MCF 10A (cell line): ENCODE measurements at regions of chr6 and their contacts with region 1.

Region 1: GRCh38 chr6:70398783-70399728 is 14.3 kb upstream of the FAM135A start:
- DNase-seq: peak; percentile 77
- H3K4me3 Mint-ChIP-seq: peak overlapping the region; percentile 52
- H3K27ac Mint-ChIP-seq: peak overlapping the region; percentile 81
- H3K4me1 Mint-ChIP-seq: peaks cover 24% of the 10 kb centered on the region
- H3K27me3 Mint-ChIP-seq: no peaks in the 10 kb centered on the region
- CTCF ChIP-seq: no peak

Region 2: DNA sequence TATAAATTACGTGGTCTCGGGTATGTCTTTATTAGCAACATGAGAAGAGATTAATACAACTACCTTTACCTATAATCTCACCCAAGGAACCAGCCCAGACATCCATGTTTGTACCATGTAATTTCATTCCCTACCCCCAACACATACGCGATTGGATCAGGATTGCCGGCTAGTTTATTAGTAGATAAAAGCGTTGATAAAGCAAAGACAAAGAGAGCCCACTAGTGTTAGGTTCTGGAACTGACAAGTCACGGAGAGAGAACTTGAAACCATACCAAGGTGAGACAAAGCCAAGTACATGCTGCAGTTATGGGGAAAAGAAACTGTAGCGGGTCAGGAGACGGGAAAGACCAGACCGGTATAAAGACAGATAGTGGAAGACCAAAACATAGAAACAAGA is 23.2 kb before region 1 on chr6:
- CTCF ChIA-PET with region 1: interaction called, 22 read pairs
- POLR2A ChIA-PET with region 1: interaction called, 24 read pairs
- intact Hi-C with region 1: loop called (anchors 2 kb)
- DNase-seq: peak; percentile 27
- H3K4me3 Mint-ChIP-seq: no peak overlapping the region
- H3K27ac Mint-ChIP-seq: no peak overlapping the region
- H3K4me1 Mint-ChIP-seq: peaks cover 24% of the 10 kb centered on the region
- H3K27me3 Mint-ChIP-seq: peaks cover 11% of the 10 kb centered on the region
- CTCF ChIP-seq: no peak

Region 3: DNA sequence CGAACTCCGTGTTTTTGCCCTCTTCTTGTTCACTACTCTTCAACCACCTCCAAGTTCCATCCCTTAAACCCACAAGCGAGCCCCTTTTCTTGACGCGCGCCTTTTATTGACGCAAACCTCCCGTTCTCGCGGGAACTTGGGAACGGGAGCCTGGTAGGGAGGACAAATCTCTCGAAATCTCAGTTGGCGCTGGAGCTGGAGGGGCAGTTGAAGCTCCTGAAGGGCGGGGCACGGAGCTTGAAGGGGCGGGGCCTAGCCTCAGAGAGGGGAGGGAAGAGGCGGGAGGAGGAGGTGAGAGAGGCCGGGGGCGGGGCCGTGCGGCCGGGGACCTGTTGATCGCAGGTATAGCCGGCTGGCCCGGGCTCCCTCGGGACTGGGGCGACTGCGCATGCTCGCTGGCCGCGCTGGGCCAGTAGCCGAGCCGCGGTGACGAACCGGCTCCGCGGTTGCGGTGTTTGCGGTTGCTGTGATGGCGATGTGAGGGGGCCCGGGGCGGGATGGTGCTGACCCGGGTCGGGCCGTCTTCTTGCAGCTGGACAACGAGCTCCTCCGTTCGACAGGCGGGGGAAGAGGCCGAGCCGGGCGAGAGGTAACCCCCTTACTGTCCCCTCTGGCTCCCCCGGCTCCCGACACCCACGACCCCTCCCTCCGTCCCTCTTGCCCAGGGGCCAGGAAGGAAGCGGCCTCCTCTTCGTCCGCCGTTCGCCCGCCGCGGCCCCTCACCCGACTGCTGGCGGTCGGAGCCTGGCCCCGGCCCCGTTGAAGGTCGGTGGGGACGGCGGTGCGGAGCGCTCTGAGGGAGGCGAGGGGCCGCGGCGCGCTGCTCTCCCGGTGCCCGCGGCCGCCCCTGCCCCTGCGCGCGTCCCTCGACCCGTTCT is 14.3 kb after region 1 on chr6 and contains the start of gene FAM135A:
- CTCF ChIA-PET with region 1: interaction called, 5 read pairs
- POLR2A ChIA-PET with region 1: interaction called, 97 read pairs
- intact Hi-C with region 1: loop called (anchors 1 kb)
- DNase-seq: peak; percentile 99
- H3K4me3 Mint-ChIP-seq: peak within 1 kb of the TSS; percentile 92
- H3K27ac Mint-ChIP-seq: peak within 1 kb of the TSS; percentile 75
- H3K4me1 Mint-ChIP-seq: no peaks in the 10 kb centered on the region
- H3K27me3 Mint-ChIP-seq: no peaks in the 10 kb centered on the region
- CTCF ChIP-seq: no peak
- total RNA-seq, gene FAM135A: 20.4 and 22.0 TPM in 2 replicates

Region 4: GRCh38 chr6:70456735-70457134 is 57.7 kb after region 1 on chr6:
- CTCF ChIA-PET with region 1: no interaction called
- POLR2A ChIA-PET with region 1: no interaction called
- intact Hi-C with region 1: no loop called
- DNase-seq: no peak
- H3K4me3 Mint-ChIP-seq: no peak overlapping the region
- H3K27ac Mint-ChIP-seq: no peak overlapping the region
- H3K4me1 Mint-ChIP-seq: no peaks in the 10 kb centered on the region
- H3K27me3 Mint-ChIP-seq: no peaks in the 10 kb centered on the region
- CTCF ChIP-seq: no peak

Region 5: GRCh38 chr6:70547313-70547712 is 148.3 kb after region 1 on chr6:
- CTCF ChIA-PET with region 1: no interaction called
- POLR2A ChIA-PET with region 1: no interaction called
- intact Hi-C with region 1: no loop called
- DNase-seq: peak; percentile 10
- H3K4me3 Mint-ChIP-seq: no peak overlapping the region
- H3K27ac Mint-ChIP-seq: no peak overlapping the region
- H3K4me1 Mint-ChIP-seq: no peaks in the 10 kb centered on the region
- H3K27me3 Mint-ChIP-seq: no peaks in the 10 kb centered on the region
- CTCF ChIP-seq: peak; percentile 28

Region 6: GRCh38 chr6:70667711-70668498 is 268.8 kb after region 1 on chr6 and contains the start of gene SMAP1:
- CTCF ChIA-PET with region 1: interaction called, 4 read pairs
- POLR2A ChIA-PET with region 1: interaction called, 23 read pairs
- intact Hi-C with region 1: no loop called
- DNase-seq: peak; percentile 91
- H3K4me3 Mint-ChIP-seq: peak within 1 kb of the TSS; percentile 90
- H3K27ac Mint-ChIP-seq: peak within 1 kb of the TSS; percentile 89
- H3K4me1 Mint-ChIP-seq: peaks cover 35% of the 10 kb centered on the region
- H3K27me3 Mint-ChIP-seq: no peaks in the 10 kb centered on the region
- CTCF ChIP-seq: no peak
- total RNA-seq, gene SMAP1: 26.5 and 28.2 TPM in 2 replicates